Vagina (tissue), 2 donors: ENCODE measurements at regions of chr10 and their contacts with region 1.

Region 1: DNA sequence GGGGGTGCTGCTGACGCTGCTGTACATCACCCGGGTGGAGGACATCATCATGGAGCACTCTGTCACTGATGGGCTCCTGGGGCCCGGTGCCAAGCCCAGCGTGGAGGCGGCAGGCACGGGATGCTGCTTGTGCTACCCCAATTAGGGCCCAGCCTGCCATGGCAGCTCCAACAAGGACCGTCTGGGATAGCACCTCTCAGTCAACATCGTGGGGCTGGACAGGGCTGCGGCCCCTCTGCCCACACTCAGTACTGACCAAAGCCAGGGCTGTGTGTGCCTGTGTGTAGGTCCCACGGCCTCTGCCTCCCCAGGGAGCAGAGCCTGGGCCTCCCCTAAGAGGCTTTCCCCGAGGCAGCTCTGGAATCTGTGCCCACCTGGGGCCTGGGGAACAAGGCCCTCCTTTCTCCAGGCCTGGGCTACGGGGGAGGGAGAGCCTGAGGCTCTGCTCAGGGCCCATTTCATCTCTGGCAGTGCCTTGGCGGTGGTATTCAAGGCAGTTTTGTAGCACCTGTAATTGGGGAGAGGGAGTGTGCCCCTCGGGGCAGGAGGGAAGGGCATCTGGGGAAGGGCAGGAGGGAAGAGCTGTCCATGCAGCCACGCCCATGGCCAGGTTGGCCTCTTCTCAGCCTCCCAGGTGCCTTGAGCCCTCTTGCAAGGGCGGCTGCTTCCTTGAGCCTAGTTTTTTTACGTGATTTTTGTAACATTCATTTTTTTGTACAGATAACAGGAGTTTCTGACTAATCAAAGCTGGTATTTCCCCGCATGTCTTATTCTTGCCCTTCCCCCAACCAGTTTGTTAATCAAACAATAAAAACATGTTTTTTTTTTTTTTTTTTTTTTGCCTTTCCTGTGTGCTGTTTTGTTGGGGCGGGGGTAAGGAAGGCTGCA is 55.8 kb downstream of the TSPAN15 start:
- DNase-seq: no peak
- H3K4me3 ChIP-seq: no peak overlapping the region
- H3K27ac ChIP-seq: no peak overlapping the region
- H3K4me1 ChIP-seq: peaks cover 12% of the 10 kb centered on the region
- H3K27me3 ChIP-seq: no peaks in the 10 kb centered on the region
- CTCF ChIP-seq: no peak
- POLR2A ChIP-seq: no peak

Region 2: GRCh38 chr10:69237528-69238159 is 269.4 kb before region 1 on chr10:
- intact Hi-C with region 1: loop called (anchors 10 kb)
- DNase-seq: no peak
- H3K4me3 ChIP-seq: no peak overlapping the region
- H3K27ac ChIP-seq: no peak overlapping the region
- H3K4me1 ChIP-seq: peaks cover 11% of the 10 kb centered on the region
- H3K27me3 ChIP-seq: no peaks in the 10 kb centered on the region
- CTCF ChIP-seq: peak; percentile 78 to 99 (median 97)
- POLR2A ChIP-seq: no peak

Region 3: DNA sequence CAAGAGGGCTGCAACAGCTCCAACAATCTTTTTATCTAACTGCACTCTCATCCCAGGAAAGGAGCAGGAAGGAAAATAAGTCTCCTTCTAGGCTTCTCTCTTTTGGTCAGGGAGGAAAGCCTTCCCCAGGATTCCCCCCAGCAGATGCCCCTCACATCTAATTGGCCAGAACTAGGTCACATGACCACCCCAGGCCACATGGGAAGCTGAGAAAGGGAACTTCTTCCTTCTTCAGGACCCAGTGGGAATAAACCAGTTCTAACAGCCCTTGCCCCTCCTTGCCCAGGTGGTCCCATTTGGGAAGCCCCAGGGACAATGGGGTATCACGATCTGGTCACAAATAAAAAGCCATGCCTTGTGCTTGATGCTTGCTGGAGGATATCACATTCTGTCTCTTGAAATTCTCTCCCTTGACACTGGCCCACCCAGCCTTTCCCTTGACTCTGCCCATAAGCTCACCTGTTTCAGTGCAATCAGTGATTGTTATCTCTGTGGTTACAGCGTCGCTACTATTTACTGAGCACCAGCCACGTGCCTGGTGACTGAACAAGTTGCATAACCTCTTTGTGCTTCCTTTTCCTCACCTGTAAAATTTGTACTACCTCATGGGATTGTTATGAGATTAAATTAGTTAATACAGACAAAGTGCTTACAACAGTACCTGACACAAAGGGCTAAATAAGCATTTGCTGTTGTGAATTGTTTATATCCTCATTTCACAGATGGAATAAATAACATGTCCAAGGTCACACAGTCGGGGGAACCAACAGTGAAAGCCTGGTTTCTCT is 81.4 kb before region 1 on chr10:
- intact Hi-C with region 1: loop called (anchors 1 kb)
- DNase-seq: no peak
- H3K4me3 ChIP-seq: no peak overlapping the region
- H3K27ac ChIP-seq: no peak overlapping the region
- H3K4me1 ChIP-seq: no peaks in the 10 kb centered on the region
- H3K27me3 ChIP-seq: no peaks in the 10 kb centered on the region
- CTCF ChIP-seq: no peak
- POLR2A ChIP-seq: no peak